ENCODE measurements at regions of chr2 and their contacts with region 1.

Region 1: DNA sequence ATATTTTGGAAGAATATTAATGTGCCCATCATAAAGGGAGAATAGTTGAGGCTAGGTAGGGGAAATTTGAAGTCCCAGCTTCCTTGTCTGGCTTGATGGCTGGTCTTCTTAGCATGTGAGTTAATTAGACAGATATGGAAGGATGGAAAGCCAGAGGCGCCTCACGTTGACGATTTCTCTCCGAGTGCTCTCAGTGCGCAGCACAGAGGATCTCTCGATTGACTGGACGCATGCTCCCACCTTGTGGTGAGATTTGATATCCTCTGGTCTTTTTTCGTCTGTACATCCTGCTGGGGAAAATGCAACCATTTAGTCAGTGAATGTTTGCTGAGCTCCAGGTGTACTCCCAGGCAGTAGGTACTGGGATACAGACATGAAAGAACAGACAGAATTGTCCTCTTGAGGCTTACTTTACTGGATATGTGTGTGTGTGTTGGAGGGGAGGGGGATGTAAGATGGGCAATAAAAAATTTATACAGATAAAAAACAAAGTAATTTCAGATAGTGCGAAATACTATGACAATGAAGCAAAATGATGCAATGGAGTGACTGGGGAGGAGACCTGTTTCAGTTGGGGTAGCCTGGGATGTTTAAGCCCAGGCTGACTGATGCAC is 66.9 kb upstream of the ZNG1B start:
- DNase-seq: peak; percentile 92
- H3K4me3 Mint-ChIP-seq: no peak overlapping the region
- H3K27ac Mint-ChIP-seq: no peak overlapping the region
- H3K4me1 Mint-ChIP-seq: peaks cover 13% of the 10 kb centered on the region
- H3K27me3 Mint-ChIP-seq: peaks cover 8% of the 10 kb centered on the region

Region 2: GRCh38 chr2:113025737-113026136 is 344.8 kb before region 1 on chr2:
- intact Hi-C with region 1: no loop called
- DNase-seq: no peak
- H3K4me3 Mint-ChIP-seq: no peak overlapping the region
- H3K27ac Mint-ChIP-seq: no peak overlapping the region
- H3K4me1 Mint-ChIP-seq: no peaks in the 10 kb centered on the region
- H3K27me3 Mint-ChIP-seq: peaks cover 59% of the 10 kb centered on the region

Region 3: DNA sequence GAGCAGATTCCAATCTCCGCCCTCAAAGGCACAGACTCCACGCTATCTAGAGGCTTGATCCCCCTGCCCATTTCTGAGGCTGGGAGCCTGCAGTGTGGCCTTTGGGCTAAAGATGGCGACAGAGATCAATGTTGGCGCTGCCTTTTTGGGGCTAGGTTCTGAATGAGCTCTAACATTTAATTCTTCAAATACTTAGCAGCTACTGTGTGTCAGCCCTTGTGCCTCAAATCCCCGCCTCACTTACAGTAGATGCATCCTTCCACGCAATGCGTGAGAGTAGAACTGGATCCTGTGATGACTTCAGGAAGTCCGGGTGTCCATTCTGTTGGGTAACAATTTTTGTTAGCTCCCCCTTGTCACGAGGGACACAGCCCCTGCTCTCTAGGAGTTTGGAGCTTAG is 290.5 kb before region 1 on chr2:
- intact Hi-C with region 1: loop called (anchors 10 kb)
- DNase-seq: peak; percentile 88
- H3K4me3 Mint-ChIP-seq: no peak overlapping the region
- H3K27ac Mint-ChIP-seq: no peak overlapping the region
- H3K4me1 Mint-ChIP-seq: peaks cover 29% of the 10 kb centered on the region
- H3K27me3 Mint-ChIP-seq: peaks cover 15% of the 10 kb centered on the region

Region 4: DNA sequence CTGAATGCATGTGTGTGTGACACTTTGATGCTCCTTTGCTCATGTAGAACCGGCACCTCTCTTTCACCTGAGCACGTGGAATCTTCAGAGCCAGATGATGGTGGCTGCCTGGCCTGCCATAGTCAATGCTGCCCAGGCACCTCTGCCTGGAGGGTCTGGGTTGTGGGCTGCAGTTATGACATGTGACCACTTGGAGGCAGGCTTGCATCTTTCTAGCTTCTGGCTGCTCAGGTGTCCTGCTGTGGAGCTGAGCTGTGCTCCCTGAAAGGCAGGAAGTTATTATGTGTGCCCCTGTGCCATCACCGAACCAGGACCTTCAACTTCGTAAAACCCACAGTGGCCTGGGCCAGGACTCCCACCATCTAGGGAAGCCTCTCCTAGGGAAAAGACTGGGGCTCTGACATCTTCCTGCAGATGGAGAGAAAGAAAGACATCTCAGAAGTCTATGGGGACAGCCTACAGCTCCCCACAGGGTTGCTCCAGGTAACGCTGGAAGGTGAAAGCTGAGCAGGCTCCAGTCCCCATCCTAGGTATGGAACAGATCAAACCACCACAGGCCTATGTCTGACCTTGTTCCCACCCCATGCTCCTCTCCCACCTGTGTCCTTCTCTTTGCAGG is 166.6 kb before region 1 on chr2:
- intact Hi-C with region 1: loop called (anchors 2 kb)
- DNase-seq: peak; percentile 92
- H3K4me3 Mint-ChIP-seq: no peak overlapping the region
- H3K27ac Mint-ChIP-seq: peak overlapping the region; percentile 76
- H3K4me1 Mint-ChIP-seq: peaks cover 17% of the 10 kb centered on the region
- H3K27me3 Mint-ChIP-seq: no peaks in the 10 kb centered on the region

Region 5: GRCh38 chr2:113248997-113249770 is 121.4 kb before region 1 on chr2:
- intact Hi-C with region 1: loop called (anchors 1 kb)
- DNase-seq: peak; percentile 93
- H3K4me3 Mint-ChIP-seq: no peak overlapping the region
- H3K27ac Mint-ChIP-seq: peak overlapping the region; percentile 61
- H3K4me1 Mint-ChIP-seq: peaks cover 43% of the 10 kb centered on the region
- H3K27me3 Mint-ChIP-seq: no peaks in the 10 kb centered on the region

Region 6: GRCh38 chr2:113273027-113273551 is 97.5 kb before region 1 on chr2:
- intact Hi-C with region 1: no loop called
- DNase-seq: peak; percentile 83
- H3K4me3 Mint-ChIP-seq: no peak overlapping the region
- H3K27ac Mint-ChIP-seq: no peak overlapping the region
- H3K4me1 Mint-ChIP-seq: peaks cover 9% of the 10 kb centered on the region
- H3K27me3 Mint-ChIP-seq: peaks cover 71% of the 10 kb centered on the region

Region 7: DNA sequence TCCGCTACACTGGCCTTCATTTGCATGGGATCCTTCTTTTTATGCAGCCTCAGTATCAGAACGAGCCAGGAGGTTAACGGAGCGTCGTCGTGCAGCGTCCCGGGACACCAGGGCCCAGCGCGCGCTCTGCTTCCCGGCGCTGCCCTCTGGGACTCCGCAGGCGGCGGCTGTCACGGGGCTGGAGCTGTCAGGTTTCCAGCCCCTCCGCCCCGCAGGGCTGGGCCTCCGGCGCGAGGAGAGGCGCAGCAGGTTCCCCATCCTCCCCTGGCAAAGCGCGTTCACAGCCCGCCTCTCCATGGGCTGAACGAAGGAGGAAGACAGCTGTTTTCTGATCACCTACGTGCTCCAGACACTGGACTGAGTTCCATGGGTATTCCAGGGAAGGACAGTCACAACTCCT is 79.4 kb before region 1 on chr2:
- intact Hi-C with region 1: loop called (anchors 2 kb)
- DNase-seq: no peak
- H3K4me3 Mint-ChIP-seq: no peak overlapping the region
- H3K27ac Mint-ChIP-seq: no peak overlapping the region
- H3K4me1 Mint-ChIP-seq: no peaks in the 10 kb centered on the region
- H3K27me3 Mint-ChIP-seq: peaks cover 50% of the 10 kb centered on the region

Region 8: DNA sequence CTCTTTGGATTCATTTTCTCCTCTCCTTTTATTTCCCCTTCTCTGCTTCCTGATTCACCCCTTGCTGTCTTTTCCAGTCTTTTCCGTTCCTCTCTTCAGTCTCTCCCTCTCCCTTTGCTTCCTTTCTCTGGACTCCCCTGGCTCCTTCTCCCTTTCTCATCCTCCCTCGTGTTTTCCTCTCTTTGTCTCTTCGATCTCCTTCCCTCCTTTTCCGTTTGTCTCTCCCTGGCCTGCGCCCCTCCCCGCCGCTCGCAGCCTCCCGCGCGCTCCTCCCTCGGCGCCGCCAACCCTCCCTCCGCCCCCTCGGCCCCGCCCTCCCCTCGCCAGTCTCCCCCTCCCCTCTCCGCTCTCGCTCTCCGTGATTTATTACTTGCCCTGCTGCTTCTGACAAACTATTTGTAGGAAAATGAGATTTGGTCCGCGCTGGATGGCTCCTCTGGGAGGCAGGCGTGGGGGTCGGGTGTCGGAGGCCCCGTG is 45.9 kb before region 1 on chr2:
- intact Hi-C with region 1: no loop called
- DNase-seq: peak; percentile 76
- H3K4me3 Mint-ChIP-seq: peak overlapping the region; percentile 77
- H3K27ac Mint-ChIP-seq: no peak overlapping the region
- H3K4me1 Mint-ChIP-seq: peaks cover 16% of the 10 kb centered on the region
- H3K27me3 Mint-ChIP-seq: peaks cover 19% of the 10 kb centered on the region